A549 (cell line): ENCODE measurements at regions of chr12 and their contacts with region 1.

Region 1: DNA sequence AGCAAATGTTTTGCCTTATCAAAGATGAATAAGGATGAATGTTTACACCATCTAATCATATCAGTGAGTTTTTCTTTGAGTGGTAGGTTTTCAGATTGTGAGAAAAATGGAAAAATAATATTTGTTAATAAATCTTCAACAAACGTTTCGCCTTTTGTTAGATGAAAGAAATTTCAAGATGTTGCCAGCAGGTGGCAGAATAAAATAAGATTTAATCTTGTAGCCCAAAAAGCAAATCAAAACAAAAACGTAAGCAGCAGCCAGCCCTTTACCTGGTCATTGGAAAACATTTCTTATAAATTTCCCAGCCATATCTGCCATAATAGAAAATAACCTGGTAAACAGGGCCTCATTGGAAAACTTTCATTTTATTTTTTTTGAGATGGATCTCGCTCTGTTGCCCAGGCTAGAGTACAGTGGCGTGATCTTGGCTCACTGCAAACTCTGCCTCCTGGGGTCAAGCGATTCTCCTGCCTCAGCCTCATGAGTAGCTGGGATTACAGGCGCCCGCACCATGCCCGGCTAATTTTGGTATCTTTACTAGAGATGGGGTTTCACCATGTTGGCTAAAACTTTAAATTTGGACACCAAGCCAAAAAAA is 15.4 kb upstream of the TMEM120B start:
- DNase-seq: peak; percentile 54 to 70
- ATAC-seq: peak in 1 of 2 experiments; percentile 55; a peak in 3 of 6 replicates
- H3K4me3 ChIP-seq: no peak overlapping the region
- H3K27ac ChIP-seq: peak overlapping the region; percentile 4 to 27; a peak in 3 of 6 replicates
- H3K4me1 ChIP-seq: peaks cover 13% of the 10 kb centered on the region; the same call in 2 of the 3 replicates
- CTCF ChIP-seq: peak; percentile 83
- EP300 ChIP-seq: no peak
- POLR2A ChIP-seq: no peak
- RAD21 ChIP-seq: peak; percentile 88 to 90

Region 2: DNA sequence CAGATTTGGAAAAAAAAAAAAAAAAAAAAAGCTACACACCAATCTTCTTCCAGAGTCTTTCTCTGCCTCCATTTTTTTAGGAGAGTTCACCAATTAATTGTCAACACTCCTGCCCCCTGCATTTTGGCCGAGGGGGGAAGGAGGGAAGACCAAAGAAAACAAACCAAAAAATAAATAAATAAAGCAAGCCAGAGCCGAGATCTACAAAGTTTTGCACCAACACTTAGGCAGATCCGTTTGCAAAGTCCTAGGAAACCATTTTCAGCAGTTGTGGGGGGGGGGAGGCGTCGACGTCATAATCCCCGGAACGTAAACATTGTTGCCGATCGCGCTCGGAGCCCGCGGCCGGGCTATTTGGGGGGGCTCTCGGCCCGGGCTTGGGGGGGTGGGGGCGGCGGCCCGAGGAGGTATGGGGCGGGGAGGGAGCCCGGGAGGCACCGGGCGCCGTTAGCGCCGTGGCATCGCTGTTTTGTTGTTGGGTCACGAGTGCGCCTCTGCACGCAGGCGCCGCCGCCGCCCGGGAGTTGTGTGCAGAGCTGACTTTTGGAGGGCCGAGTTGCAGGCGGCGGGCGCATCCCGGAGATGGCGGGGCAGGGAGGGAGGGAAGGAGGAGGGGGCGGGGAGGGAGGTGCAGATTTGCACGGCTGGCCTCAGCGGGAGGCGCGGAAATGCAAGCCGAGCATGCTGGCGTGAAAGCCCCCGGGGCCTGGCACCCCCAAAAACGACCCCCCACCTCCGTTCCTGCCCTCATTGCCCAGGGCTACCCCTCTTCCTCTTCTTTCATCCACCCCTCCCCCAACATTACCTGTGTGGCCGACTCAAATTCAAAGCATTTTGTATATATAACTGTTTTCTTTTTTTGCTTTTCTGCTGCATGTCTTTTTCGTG is 117.0 kb before region 1 on chr12:
- CTCF ChIA-PET with region 1: no interaction called
- POLR2A ChIA-PET with region 1: interaction called, 10 read pairs
- DNase-seq: peak; percentile 58 to 67
- ATAC-seq: peak; percentile 78 to 80
- H3K4me3 ChIP-seq: peak overlapping the region; percentile 54
- H3K27ac ChIP-seq: peak overlapping the region; percentile 77 to 94
- H3K4me1 ChIP-seq: peaks cover 49% of the 10 kb centered on the region
- CTCF ChIP-seq: no peak
- EP300 ChIP-seq: no peak
- POLR2A ChIP-seq: peak; percentile 47
- RAD21 ChIP-seq: no peak

Region 3: DNA sequence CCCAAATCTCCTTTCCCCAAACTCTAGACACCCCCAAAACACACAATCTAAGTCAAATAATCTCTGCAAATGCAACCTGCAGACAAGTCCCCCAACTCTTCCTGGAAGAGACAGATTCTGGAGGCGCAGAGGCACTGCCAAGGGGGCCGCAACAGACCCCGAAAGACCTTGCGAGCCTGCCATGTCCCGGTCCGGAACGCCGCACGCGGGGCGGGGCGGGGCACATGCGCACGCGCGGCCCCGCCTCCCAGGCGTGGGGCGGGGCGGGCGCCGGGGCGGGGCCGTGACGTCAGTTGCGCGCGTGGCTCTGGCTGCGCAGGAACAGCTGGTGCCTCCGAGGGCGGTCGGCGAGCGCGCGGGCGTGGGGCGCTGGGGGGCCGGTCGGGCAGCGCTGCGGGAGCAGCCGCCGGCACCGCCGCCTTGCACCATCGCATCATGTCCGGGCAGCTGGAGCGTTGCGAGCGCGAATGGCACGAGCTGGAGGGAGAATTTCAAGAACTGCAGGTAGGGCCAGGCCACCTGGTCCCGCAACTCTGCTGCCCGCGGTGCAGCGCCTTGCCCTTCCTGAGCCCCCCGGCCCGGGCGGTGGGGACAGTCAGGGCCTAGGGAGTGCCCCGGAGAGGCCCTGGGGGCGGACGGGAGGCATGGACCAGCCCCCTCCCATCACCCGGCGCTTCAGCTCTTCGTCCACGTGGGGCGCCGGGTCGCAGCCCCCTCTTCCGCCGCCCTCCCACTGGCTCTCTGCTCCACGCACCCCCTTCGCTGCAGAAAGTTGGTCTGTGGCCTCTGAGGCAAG is 15.5 kb after region 1 on chr12 and contains the start of gene TMEM120B:
- CTCF ChIA-PET with region 1: interaction called, 13 read pairs
- POLR2A ChIA-PET with region 1: no interaction called
- DNase-seq: peak; percentile 70 to 75
- ATAC-seq: peak; percentile 78 to 81
- H3K4me3 ChIP-seq: peak within 1 kb of the TSS; percentile 69
- H3K27ac ChIP-seq: peak within 1 kb of the TSS; percentile 73 to 86
- H3K4me1 ChIP-seq: peaks cover 32% of the 10 kb centered on the region
- CTCF ChIP-seq: peak; percentile 11; the same call in 1 of the 3 replicates
- EP300 ChIP-seq: no peak
- POLR2A ChIP-seq: peak; percentile 97
- RAD21 ChIP-seq: no peak
- polyA plus RNA-seq, gene TMEM120B: 13.2 and 18.2 TPM in 2 replicates

Region 4: GRCh38 chr12:121811434-121812319 is 114.5 kb after region 1 on chr12:
- CTCF ChIA-PET with region 1: interaction called, 15 read pairs
- POLR2A ChIA-PET with region 1: no interaction called
- DNase-seq: peak; percentile 70 to 72
- ATAC-seq: peak; percentile 81 to 89
- H3K4me3 ChIP-seq: peak overlapping the region; percentile 53
- H3K27ac ChIP-seq: peak overlapping the region; percentile 74 to 85
- H3K4me1 ChIP-seq: peaks cover 39% of the 10 kb centered on the region
- CTCF ChIP-seq: peak; percentile 97
- EP300 ChIP-seq: no peak
- POLR2A ChIP-seq: no peak
- RAD21 ChIP-seq: peak; percentile 54 to 92; a peak in 4 of 5 replicates